ENCODE measurements at regions of chr7 and their contacts with region 1.

Region 1: GRCh38 chr7:111752022-111752582 is 189.8 kb upstream of the IMMP2L start:
- DNase-seq: peak; percentile 38 to 67 (median 47)
- H3K4me3 ChIP-seq: no peak overlapping the region
- H3K27ac ChIP-seq: no peak overlapping the region
- H3K4me1 ChIP-seq: no peaks in the 10 kb centered on the region
- H3K27me3 ChIP-seq: no peaks in the 10 kb centered on the region
- CTCF ChIP-seq: peak; percentile 41 to 69 (median 64)
- POLR2A ChIP-seq: no peak

Region 2: GRCh38 chr7:112226701-112227276 is 474.7 kb after region 1 on chr7:
- intact Hi-C with region 1: loop called in 1 of 2 experiments (anchors 10 kb)
- DNase-seq: no peak
- H3K4me3 ChIP-seq: no peak overlapping the region
- H3K27ac ChIP-seq: no peak overlapping the region
- H3K4me1 ChIP-seq: peaks cover 5 to 9% of the 10 kb centered on the region in 2 donors
- H3K27me3 ChIP-seq: no peaks in the 10 kb centered on the region
- CTCF ChIP-seq: no peak
- POLR2A ChIP-seq: no peak

Region 3: DNA sequence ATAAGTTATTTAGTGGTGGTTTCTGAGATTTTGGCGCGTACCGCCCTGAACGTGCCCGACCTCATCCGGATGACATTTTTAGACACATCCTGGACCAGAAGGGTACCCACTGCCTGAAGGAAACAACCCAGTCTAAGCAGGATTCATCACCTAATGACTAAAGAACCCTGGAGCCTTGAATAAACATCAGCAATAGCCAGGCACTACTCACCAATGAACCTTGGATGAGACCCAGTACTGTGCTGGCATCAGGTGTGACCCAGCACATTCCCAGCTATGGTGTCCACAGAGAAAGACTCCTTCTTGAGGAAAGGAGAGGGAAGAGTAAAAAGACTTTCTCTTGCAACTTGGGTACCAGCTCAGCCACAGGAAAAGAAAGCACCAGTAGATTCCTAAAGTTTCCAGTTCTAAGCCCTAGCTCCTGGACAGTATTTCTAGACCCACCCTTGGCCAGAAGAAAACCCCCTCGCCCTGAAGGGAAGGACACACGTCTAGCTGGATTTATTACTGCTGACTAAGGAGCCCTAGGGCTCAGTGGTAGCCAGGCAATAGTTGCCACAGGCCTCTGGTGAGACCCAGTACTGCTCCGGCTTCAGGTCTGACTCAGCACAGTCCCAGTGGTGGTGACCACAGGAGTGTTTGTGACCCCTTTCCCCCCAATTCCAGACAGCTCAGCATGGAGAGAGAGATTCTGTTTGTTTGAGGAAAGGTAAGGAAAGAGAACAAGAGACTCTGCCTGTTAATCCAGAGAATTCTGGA is 486.9 kb after region 1 on chr7:
- intact Hi-C with region 1: no loop called
- DNase-seq: no peak
- H3K4me3 ChIP-seq: no peak overlapping the region
- H3K27ac ChIP-seq: no peak overlapping the region
- H3K4me1 ChIP-seq: no peaks in the 10 kb centered on the region
- H3K27me3 ChIP-seq: no peaks in the 10 kb centered on the region
- CTCF ChIP-seq: no peak
- POLR2A ChIP-seq: no peak

Region 4: DNA sequence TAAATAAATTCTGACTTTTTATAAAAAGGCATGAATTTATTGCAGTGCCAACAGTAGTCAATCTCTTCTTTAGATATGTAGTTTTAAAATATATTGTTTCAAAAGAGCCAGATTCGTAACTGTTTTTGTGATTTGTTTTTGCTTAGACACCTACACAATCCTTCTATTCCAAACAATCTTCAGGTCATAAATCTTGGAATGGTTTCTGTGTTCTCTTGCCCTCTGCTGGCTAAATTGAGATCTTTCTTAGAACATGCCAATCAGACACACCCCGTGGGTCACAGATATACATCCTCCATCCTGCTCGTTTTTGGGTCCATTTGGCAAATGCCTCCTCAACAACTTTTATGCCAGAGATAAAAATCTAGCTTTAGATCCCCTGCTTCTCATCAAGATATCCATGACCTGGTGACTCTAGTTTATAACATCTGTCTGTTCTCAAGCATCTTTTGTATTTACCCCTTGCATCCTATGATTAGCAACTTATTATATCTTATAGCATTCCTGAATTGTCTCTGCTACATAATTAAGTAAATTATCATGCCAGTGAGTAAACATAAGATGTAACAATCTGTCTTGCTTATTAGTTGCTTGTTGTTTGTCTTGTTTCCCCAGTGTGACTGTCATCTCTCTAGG is 662.9 kb after region 1 on chr7:
- intact Hi-C with region 1: loop called in 1 of 2 experiments (anchors 10 kb)
- DNase-seq: peak in 1 of 7 donors; percentile 12
- H3K4me3 ChIP-seq: no peak overlapping the region
- H3K27ac ChIP-seq: no peak overlapping the region
- H3K4me1 ChIP-seq: peaks cover 0 to 9% of the 10 kb centered on the region in 2 donors
- H3K27me3 ChIP-seq: no peaks in the 10 kb centered on the region
- CTCF ChIP-seq: peak; percentile 34 to 67 (median 58)
- POLR2A ChIP-seq: no peak

Region 5: GRCh38 chr7:112495810-112496462 is 743.8 kb after region 1 on chr7:
- intact Hi-C with region 1: loop called in 1 of 2 experiments (anchors 5 kb)
- DNase-seq: peak; percentile 58 to 86 (median 72)
- H3K4me3 ChIP-seq: no peak overlapping the region
- H3K27ac ChIP-seq: no peak overlapping the region
- H3K4me1 ChIP-seq: no peaks in the 10 kb centered on the region
- H3K27me3 ChIP-seq: no peaks in the 10 kb centered on the region
- CTCF ChIP-seq: peak; percentile 51 to 85 (median 76)
- POLR2A ChIP-seq: no peak

Measured in adrenal gland (tissue), 19 donors.